Mammary epithelial cell (primary cell): ENCODE measurements at regions of chr2 and their contacts with region 1.

Region 1: DNA sequence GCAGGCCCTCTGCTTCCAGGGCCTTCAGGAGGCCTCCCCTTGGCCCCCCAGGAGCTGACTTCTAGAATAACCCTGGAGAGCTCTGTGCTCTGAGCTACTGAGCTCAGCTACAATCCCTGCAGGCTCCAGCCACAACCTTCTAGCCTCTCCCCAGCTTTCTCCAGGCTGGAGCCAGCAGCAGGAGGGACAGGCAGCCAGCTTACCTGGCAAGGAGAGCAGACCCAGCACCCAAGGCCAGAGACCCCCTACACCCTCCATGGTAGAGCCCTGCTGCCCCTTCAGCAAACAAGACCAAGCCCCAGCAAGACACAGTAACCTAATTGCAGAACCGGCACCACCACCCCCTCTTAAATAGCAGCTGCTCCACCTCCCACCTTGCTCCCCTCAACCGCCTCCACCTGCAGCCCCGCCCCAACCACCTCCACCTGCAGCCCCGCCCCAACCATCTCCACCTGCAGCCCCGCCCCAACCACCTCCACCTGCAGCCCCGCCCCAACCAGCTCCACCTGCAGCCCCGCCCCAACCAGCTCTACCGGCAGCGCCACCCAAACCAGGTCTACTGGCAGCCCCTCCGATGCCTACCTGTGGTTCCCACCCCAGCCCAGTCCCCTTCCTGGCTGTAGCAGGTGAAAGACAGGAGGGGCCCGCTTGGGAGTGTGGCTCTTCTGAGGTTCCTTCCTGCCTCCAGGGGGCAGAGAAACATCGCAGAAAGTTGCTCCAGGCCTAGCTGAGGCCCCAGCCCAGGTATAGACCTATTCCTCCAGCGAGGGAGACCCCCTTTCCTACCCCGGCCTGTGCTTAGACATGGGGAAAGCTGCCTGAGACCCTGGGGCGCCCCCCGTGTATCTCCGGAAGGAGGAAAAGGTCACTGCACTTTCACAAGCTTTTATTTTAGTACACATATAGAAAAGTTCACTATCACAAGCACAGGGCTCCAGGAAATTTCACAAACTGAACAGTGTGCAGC is at the start of gene ASTL:
- DNase-seq: peak; percentile 19
- H3K4me3 ChIP-seq: no peak within 1 kb of the TSS
- H3K27ac ChIP-seq: no peak within 1 kb of the TSS
- H3K4me1 ChIP-seq: no peaks in the 10 kb centered on the region
- H3K27me3 ChIP-seq: no peaks in the 10 kb centered on the region
- CTCF ChIP-seq: peak; percentile 44 to 65
- total RNA-seq, gene ASTL: 0.33 TPM in 1 of 2 donors, not detected in the other

Region 2: GRCh38 chr2:96174251-96175144 is 36.0 kb after region 1 on chr2:
- CTCF ChIA-PET with region 1: interaction called, 17 read pairs
- dilution Hi-C with region 1: no loop called
- in situ Hi-C with region 1: no loop called
- intact Hi-C with region 1: loop called (anchors 1 kb)
- DNase-seq: peak; percentile 41
- H3K4me3 ChIP-seq: no peak overlapping the region
- H3K27ac ChIP-seq: no peak overlapping the region
- H3K4me1 ChIP-seq: no peaks in the 10 kb centered on the region
- H3K27me3 ChIP-seq: no peaks in the 10 kb centered on the region
- CTCF ChIP-seq: peak; percentile 94 to 97

Region 3: DNA sequence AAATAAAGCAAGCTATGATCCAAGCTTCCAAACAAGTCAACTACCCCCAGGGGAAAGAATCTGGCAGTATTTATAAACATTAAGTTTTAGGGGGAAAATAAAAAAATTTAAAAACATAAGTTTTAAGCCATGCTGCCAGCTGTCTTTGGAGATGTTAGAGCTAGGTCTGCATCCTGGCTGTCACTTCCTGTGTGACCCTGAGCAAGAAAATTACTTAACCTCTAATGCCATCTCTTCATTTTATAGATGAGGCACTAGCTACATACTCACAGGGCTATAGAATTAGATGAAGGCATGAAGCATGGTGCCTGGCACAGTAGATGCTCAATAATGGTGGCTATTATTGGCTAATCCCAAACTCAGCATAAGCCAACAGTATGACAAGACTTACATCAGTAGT is 42.1 kb after region 1 on chr2:
- CTCF ChIA-PET with region 1: interaction called, 9 read pairs
- dilution Hi-C with region 1: loop called (anchors 5 kb)
- in situ Hi-C with region 1: no loop called
- intact Hi-C with region 1: no loop called
- DNase-seq: no peak
- H3K4me3 ChIP-seq: no peak overlapping the region
- H3K27ac ChIP-seq: no peak overlapping the region
- H3K4me1 ChIP-seq: no peaks in the 10 kb centered on the region
- H3K27me3 ChIP-seq: no peaks in the 10 kb centered on the region
- CTCF ChIP-seq: no peak

Region 4: GRCh38 chr2:96195410-96196066 is 57.1 kb after region 1 on chr2:
- CTCF ChIA-PET with region 1: no interaction called
- dilution Hi-C with region 1: no loop called
- in situ Hi-C with region 1: loop called in 1 of 2 experiments (anchors 10 kb)
- intact Hi-C with region 1: no loop called
- DNase-seq: no peak
- H3K4me3 ChIP-seq: no peak overlapping the region
- H3K27ac ChIP-seq: no peak overlapping the region
- H3K4me1 ChIP-seq: peaks cover 3% of the 10 kb centered on the region
- H3K27me3 ChIP-seq: no peaks in the 10 kb centered on the region
- CTCF ChIP-seq: no peak

Region 5: DNA sequence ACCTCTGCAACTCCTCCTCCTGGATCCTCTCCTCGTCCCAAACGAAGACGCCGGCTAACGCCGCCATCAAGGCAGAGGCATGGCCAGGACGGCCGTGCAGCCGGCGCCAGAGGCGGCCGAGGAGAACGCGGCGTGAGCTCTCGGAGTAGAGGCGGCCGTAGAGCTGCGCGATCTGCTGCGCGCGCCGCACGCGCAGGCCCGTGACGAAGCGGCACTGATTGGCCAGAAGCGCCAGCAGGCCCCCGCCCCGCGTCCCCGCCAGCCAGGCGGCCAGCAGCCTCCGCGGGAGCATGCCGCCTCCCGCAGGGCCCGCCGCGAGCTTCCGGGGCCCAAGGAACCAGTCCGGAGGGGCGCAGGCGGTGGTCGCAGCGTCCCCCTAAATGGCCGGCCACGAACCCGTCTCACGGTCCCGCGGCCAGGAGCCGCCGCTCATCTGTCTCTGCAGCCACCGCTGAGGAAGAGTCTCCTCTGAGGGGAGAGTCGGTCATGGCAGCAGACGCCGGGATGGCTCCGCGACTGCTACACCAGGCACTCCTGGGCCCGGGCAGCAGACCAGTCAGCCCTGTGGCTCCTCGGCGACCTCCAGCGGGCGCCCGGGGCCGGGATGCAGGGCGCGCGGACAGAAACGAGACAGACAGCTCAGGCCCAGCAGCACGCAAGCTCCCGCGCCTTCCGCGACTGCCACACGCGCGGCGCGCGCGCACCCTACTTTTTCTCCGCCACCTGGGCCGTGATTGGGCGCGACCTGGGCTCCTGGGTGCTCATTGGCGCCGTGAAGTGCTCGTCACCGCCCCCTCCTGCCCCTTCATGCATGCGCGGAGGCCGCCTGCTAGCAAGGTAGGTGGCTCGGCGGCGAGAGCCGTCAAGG is 69.9 kb after region 1 on chr2 and contains the start of gene STARD7:
- CTCF ChIA-PET with region 1: no interaction called
- dilution Hi-C with region 1: no loop called
- in situ Hi-C with region 1: no loop called
- intact Hi-C with region 1: loop called (anchors 2 kb)
- DNase-seq: peak; percentile 97
- H3K4me3 ChIP-seq: peak within 1 kb of the TSS; percentile 87 to 99 (median 96)
- H3K27ac ChIP-seq: peak within 1 kb of the TSS; percentile 70
- H3K4me1 ChIP-seq: peaks cover 28% of the 10 kb centered on the region
- H3K27me3 ChIP-seq: no peaks in the 10 kb centered on the region
- CTCF ChIP-seq: no peak
- total RNA-seq, gene STARD7: 96.7 to 241 TPM

Region 6: GRCh38 chr2:96265840-96266679 is 127.6 kb after region 1 on chr2 and contains the starts of genes CIAO1 and TMEM127:
- CTCF ChIA-PET with region 1: no interaction called
- dilution Hi-C with region 1: no loop called
- in situ Hi-C with region 1: no loop called
- intact Hi-C with region 1: loop called (anchors 2 kb)
- DNase-seq: peak; percentile 99
- H3K4me3 ChIP-seq: peak within 1 kb of the TSS; percentile 93 to 98 (median 96)
- H3K27ac ChIP-seq: peak within 1 kb of the TSS; percentile 76
- H3K4me1 ChIP-seq: peaks cover 30% of the 10 kb centered on the region
- H3K27me3 ChIP-seq: no peaks in the 10 kb centered on the region
- CTCF ChIP-seq: peak in 1 of 2 donors; percentile 28
- total RNA-seq, gene CIAO1: 64.5 to 93.9 TPM
- total RNA-seq, gene TMEM127: 39.9 to 43.8 TPM